HepG2 (cell line): ENCODE measurements at regions of chr15 and their contacts with region 1.

Region 1: GRCh38 chr15:58475573-58476524 is 44.1 kb downstream of the LIPC start:
- DNase-seq: peak; percentile 94
- ATAC-seq: peak; percentile 85
- H3K4me3 ChIP-seq: peak overlapping the region in 2 of 3 experiments; percentile 2 to 49; a peak in 1 of 6 replicates
- H3K27ac ChIP-seq: peak overlapping the region; percentile 70
- H3K4me1 ChIP-seq: peaks cover 84% of the 10 kb centered on the region
- H3K27me3 ChIP-seq: no peaks in the 10 kb centered on the region
- CTCF ChIP-seq: no peak
- EP300 ChIP-seq: peak; percentile 57 to 63; a peak in 2 of 4 replicates
- POLR2A ChIP-seq: no peak
- RAD21 ChIP-seq: no peak

Region 2: GRCh38 chr15:58269455-58270414 is 206.1 kb before region 1 on chr15:
- CTCF ChIA-PET with region 1: no interaction called
- POLR2A ChIA-PET with region 1: no interaction called
- in situ Hi-C with region 1: no loop called
- intact Hi-C with region 1: loop called (anchors 5 kb)
- DNase-seq: peak; percentile 71
- ATAC-seq: peak; percentile 97
- H3K4me3 ChIP-seq: no peak overlapping the region; a peak in 1 of 6 replicates
- H3K27ac ChIP-seq: no peak overlapping the region
- H3K4me1 ChIP-seq: peaks cover 5% of the 10 kb centered on the region; the same call in 1 of the 2 replicates
- H3K27me3 ChIP-seq: no peaks in the 10 kb centered on the region; a peak in 1 of 5 replicates
- CTCF ChIP-seq: peak; percentile 92
- EP300 ChIP-seq: no peak
- POLR2A ChIP-seq: no peak
- RAD21 ChIP-seq: peak; percentile 93

Region 3: DNA sequence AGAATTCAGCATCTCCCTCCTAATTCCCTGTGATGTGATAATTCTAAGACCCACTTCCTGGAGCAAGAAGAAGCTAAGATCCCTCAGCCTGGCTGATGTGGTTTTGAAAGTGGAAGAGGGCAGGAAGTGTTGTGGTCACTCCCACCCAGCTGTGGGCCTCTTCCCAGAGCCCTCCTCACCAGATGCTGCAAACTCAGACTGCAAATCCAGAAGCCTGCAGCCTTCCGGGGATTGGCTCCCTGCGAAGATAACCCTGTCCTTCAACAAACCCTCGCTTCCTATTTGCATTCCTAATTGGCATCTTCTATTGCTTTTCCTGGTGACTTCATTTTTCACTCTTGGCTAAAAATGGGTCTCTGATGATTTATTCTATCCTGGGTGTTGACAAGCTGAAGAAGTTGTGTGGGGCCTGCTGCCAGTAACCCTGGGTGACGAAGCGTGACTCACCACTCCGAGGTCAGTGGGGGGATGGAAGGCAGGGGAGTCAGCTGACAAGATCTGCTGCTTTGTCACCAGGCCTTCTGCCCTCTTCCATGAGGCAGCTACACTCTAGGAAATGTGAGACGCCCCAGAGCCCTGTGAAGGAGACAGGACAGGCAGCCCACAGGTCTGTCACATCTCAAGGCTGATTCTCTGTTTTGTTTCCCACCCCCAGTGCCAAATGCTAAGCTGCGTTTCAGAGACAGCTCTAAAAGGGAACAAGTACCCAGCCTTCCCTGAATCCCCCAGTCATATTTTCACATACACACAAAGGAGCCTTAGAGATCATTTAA is 143.8 kb before region 1 on chr15:
- CTCF ChIA-PET with region 1: no interaction called
- POLR2A ChIA-PET with region 1: interaction called, 38 read pairs
- in situ Hi-C with region 1: no loop called
- intact Hi-C with region 1: no loop called
- DNase-seq: peak; percentile 92
- ATAC-seq: peak; percentile 85
- H3K4me3 ChIP-seq: peak overlapping the region; percentile 26 to 67 (median 48)
- H3K27ac ChIP-seq: peak overlapping the region; percentile 74
- H3K4me1 ChIP-seq: peaks cover 50% of the 10 kb centered on the region
- H3K27me3 ChIP-seq: no peaks in the 10 kb centered on the region; a peak in 1 of 5 replicates
- CTCF ChIP-seq: no peak
- EP300 ChIP-seq: peak in 1 of 2 experiments; percentile 85; a peak in 2 of 4 replicates
- POLR2A ChIP-seq: peak; percentile 65 to 91
- RAD21 ChIP-seq: no peak

Region 4: GRCh38 chr15:58457381-58457965 is 18.4 kb before region 1 on chr15:
- CTCF ChIA-PET with region 1: no interaction called
- POLR2A ChIA-PET with region 1: interaction called, 49 read pairs
- in situ Hi-C with region 1: no loop called
- intact Hi-C with region 1: no loop called
- DNase-seq: no peak
- ATAC-seq: no peak
- H3K4me3 ChIP-seq: no peak overlapping the region
- H3K27ac ChIP-seq: no peak overlapping the region
- H3K4me1 ChIP-seq: peaks cover 66% of the 10 kb centered on the region
- H3K27me3 ChIP-seq: no peaks in the 10 kb centered on the region
- CTCF ChIP-seq: no peak
- EP300 ChIP-seq: no peak
- POLR2A ChIP-seq: no peak
- RAD21 ChIP-seq: no peak

Region 5: GRCh38 chr15:58487041-58487726 is 11.3 kb after region 1 on chr15:
- CTCF ChIA-PET with region 1: no interaction called
- POLR2A ChIA-PET with region 1: interaction called, 13 read pairs
- in situ Hi-C with region 1: no loop called
- intact Hi-C with region 1: no loop called
- DNase-seq: no peak
- ATAC-seq: no peak
- H3K4me3 ChIP-seq: no peak overlapping the region
- H3K27ac ChIP-seq: no peak overlapping the region
- H3K4me1 ChIP-seq: peaks cover 6% of the 10 kb centered on the region; the same call in 1 of the 2 replicates
- H3K27me3 ChIP-seq: no peaks in the 10 kb centered on the region
- CTCF ChIP-seq: no peak
- EP300 ChIP-seq: no peak
- POLR2A ChIP-seq: no peak
- RAD21 ChIP-seq: no peak

Region 6: DNA sequence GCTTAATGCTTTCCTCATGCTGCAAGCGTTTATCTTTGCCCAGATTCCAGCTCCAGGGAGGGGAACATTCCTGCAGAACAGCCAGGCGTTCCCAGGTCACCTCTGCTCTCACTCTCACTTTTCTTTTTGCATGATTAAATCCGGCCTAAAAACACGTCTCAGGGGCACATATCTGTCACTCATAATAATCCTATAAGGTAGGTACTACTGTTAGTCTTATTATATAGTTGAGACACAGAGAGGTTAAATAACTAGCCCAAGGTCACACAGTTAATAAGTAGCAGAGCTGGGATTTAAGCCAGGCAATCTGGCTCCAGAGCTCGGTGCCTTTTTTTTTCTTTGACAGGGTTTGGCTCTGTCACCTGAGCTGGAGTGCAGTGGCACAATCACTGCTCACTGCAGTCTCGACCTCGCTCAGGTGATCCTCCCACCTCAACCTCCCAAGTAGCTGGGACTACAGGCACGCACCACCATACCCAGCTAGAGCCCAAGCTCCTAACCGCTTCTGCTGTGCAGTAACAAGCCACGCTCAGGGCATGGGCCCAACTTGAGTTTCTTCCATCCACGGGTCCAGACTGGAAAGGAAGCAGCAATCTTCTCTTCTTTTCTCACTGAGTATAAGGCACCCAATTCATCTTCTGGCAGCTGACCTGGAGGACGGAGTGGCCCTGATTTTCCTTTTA is 52.5 kb after region 1 on chr15:
- CTCF ChIA-PET with region 1: no interaction called
- POLR2A ChIA-PET with region 1: interaction called, 20 read pairs
- in situ Hi-C with region 1: loop called (anchors 10 kb)
- intact Hi-C with region 1: no loop called
- DNase-seq: peak; percentile 89
- ATAC-seq: peak; percentile 92
- H3K4me3 ChIP-seq: peak overlapping the region in 1 of 3 experiments; percentile 47; a peak in 1 of 6 replicates
- H3K27ac ChIP-seq: peak overlapping the region; percentile 78
- H3K4me1 ChIP-seq: peaks cover 61% of the 10 kb centered on the region
- H3K27me3 ChIP-seq: no peaks in the 10 kb centered on the region
- CTCF ChIP-seq: no peak
- EP300 ChIP-seq: peak in 1 of 2 experiments; percentile 61; a peak in 1 of 4 replicates
- POLR2A ChIP-seq: no peak
- RAD21 ChIP-seq: no peak; the same call in 1 of the 2 replicates

Region 7: GRCh38 chr15:58770857-58771620 is 295.2 kb after region 1 on chr15 and contains the start of gene MINDY2:
- CTCF ChIA-PET with region 1: no interaction called
- POLR2A ChIA-PET with region 1: interaction called, 13 read pairs
- in situ Hi-C with region 1: no loop called
- intact Hi-C with region 1: no loop called
- DNase-seq: peak; percentile 96
- ATAC-seq: peak; percentile 96
- H3K4me3 ChIP-seq: peak within 1 kb of the TSS; percentile 81 to 94 (median 94)
- H3K27ac ChIP-seq: peak within 1 kb of the TSS; percentile 89
- H3K4me1 ChIP-seq: peaks cover 40% of the 10 kb centered on the region
- H3K27me3 ChIP-seq: no peaks in the 10 kb centered on the region; a peak in 1 of 5 replicates
- CTCF ChIP-seq: peak; percentile 74
- EP300 ChIP-seq: peak in 1 of 2 experiments; percentile 41; a peak in 1 of 4 replicates
- POLR2A ChIP-seq: peak; percentile 81 to 83; a peak in 3 of 4 replicates
- RAD21 ChIP-seq: no peak; the same call in 1 of the 2 replicates
- total RNA-seq, gene MINDY2: 12.6 and 15.6 TPM in 2 replicates

Region 8: DNA sequence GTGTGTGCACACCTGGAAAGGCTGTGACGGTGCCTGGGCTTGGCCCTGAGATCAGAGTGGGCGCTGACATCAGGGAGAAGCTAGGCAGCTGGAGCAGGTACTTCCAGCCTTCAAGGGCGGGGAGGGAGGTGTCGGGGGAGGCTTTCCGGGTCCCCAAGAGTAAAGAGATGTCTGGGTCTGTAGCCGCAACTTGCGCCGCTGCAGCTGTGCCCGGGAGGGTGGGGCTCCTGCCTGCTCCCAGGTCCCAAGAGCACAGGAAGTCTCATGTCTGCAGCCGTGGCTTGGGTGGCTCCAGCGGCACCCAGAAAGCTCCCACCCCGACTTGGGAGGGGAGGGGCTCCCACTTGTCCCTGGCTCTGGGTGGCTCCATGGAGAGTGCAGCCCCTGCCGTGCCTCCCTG is 1316.5 kb after region 1 on chr15:
- CTCF ChIA-PET with region 1: no interaction called
- POLR2A ChIA-PET with region 1: no interaction called
- in situ Hi-C with region 1: no loop called
- intact Hi-C with region 1: no loop called
- DNase-seq: no peak
- ATAC-seq: no peak
- H3K4me3 ChIP-seq: no peak overlapping the region
- H3K27ac ChIP-seq: no peak overlapping the region
- H3K4me1 ChIP-seq: no peaks in the 10 kb centered on the region
- H3K27me3 ChIP-seq: peaks cover 0 to 9% of the 10 kb centered on the region in 2 experiments; a peak in 1 of 5 replicates
- CTCF ChIP-seq: no peak
- EP300 ChIP-seq: no peak
- POLR2A ChIP-seq: no peak
- RAD21 ChIP-seq: no peak